A673 (cell line): ENCODE measurements at regions of chr16 and their contacts with region 1.

Region 1: GRCh38 chr16:27374804-27375425 is 27.1 kb upstream of the IL21R start:
- DNase-seq: peak; percentile 94
- H3K4me3 ChIP-seq: no peak overlapping the region
- H3K27ac ChIP-seq: no peak overlapping the region
- H3K4me1 ChIP-seq: no peaks in the 10 kb centered on the region
- H3K27me3 ChIP-seq: no peaks in the 10 kb centered on the region
- CTCF ChIP-seq: peak; percentile 77

Region 2: GRCh38 chr16:26901196-26901861 is 473.6 kb before region 1 on chr16:
- CTCF ChIA-PET with region 1: no interaction called
- POLR2A ChIA-PET with region 1: no interaction called
- intact Hi-C with region 1: no loop called
- DNase-seq: no peak
- H3K4me3 ChIP-seq: no peak overlapping the region
- H3K27ac ChIP-seq: no peak overlapping the region
- H3K4me1 ChIP-seq: no peaks in the 10 kb centered on the region
- H3K27me3 ChIP-seq: no peaks in the 10 kb centered on the region
- CTCF ChIP-seq: no peak

Region 3: GRCh38 chr16:27154705-27155521 is 220.0 kb before region 1 on chr16:
- CTCF ChIA-PET with region 1: no interaction called
- POLR2A ChIA-PET with region 1: no interaction called
- intact Hi-C with region 1: loop called (anchors 2 kb)
- DNase-seq: peak; percentile 59
- H3K4me3 ChIP-seq: no peak overlapping the region
- H3K27ac ChIP-seq: no peak overlapping the region
- H3K4me1 ChIP-seq: no peaks in the 10 kb centered on the region
- H3K27me3 ChIP-seq: no peaks in the 10 kb centered on the region
- CTCF ChIP-seq: peak; percentile 98

Region 4: DNA sequence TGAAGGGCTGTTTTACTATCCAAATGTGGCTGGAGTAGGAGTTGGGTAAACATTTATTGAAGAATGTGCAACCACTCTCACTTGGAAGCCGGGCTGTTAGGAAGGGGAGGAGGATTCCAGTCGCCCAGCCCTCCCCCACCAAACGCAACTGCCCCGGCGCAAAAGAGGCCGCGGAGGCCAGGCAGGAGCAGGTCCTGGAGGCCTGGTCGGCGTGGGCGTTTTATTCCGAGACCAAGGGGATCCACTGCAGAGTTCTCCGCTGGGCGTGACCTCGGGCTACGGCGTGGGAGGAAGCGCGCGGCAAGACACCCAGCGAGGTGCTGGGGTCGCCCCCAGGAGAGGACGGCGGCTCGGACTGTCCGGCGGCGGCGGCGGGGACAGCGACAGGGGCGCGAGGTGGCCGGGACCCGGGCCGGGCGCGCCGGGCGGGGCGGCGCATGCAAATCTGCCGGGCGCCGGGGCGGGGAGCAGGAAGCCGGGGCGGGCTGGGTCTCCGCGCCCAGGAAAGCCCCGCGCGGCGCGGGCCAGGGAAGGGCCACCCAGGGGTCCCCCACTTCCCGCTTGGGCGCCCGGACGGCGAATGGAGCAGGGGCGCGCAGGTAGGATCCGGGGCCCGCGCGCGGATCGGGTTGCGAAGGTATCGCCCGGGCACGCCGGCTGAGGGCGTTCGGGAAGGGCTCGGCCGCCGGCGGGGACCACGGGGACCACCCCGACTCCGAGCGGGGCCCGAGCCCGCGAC is 61.3 kb before region 1 on chr16 and contains the start of gene IL4R:
- CTCF ChIA-PET with region 1: no interaction called
- POLR2A ChIA-PET with region 1: no interaction called
- intact Hi-C with region 1: no loop called
- DNase-seq: peak; percentile 42
- H3K4me3 ChIP-seq: peak within 1 kb of the TSS; percentile 81
- H3K27ac ChIP-seq: peak within 1 kb of the TSS; percentile 71
- H3K4me1 ChIP-seq: no peaks in the 10 kb centered on the region
- H3K27me3 ChIP-seq: no peaks in the 10 kb centered on the region
- CTCF ChIP-seq: no peak
- total RNA-seq, gene IL4R: 22.9 and 27.4 TPM in 2 replicates